ENCODE measurements at regions of chr15 and their contacts with region 1.

Region 1: DNA sequence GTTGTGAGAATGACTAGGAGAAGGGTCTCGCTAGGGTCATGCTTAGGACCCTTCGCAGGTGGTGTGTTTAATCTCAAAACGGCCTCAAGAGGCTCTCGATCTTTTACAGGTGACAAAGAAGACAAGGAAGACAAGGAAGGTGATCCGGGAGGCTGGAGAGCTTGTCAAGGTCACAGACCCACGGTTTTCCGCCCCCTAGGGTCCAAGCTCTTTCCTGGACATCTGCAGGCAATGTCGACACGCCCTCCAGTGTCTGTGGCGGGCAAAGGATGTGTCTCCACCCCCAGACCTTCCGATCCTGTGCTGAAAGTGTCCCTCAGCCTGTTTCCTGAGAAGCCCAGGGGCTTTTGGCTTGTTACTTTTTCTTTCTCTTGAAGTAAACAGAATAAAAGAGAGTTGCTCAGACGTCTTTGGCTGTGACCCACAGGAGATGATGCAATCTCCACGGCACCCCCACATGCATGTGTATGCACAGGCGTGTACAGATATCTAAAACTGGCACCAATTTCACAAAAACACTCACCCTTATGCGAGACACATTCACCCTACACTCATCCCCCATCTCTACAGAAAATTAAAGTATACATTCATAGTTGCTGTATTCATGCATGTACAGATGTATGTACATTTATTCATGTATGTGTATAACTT is 108.8 kb downstream of the KLF13 start:
- DNase-seq: peak in 34 of 35 experiments; percentile 70 to 94 (median 87)
- ATAC-seq: peak; percentile 67 to 80 (median 72)
- H3K4me3 ChIP-seq: peak overlapping the region; percentile 41 to 55
- H3K4me3 Mint-ChIP-seq: peak overlapping the region; percentile 77 to 86 (median 78)
- H3K27ac ChIP-seq: peak overlapping the region; percentile 92
- H3K27ac Mint-ChIP-seq: peak overlapping the region; percentile 98
- H3K4me1 ChIP-seq: peaks cover 32 to 76% of the 10 kb centered on the region in 2 experiments
- H3K4me1 Mint-ChIP-seq: peaks cover 80 to 87% (median 81%) of the 10 kb centered on the region in 3 donors
- H3K27me3 ChIP-seq: no peaks in the 10 kb centered on the region
- H3K27me3 Mint-ChIP-seq: no peaks in the 10 kb centered on the region

Region 2: DNA sequence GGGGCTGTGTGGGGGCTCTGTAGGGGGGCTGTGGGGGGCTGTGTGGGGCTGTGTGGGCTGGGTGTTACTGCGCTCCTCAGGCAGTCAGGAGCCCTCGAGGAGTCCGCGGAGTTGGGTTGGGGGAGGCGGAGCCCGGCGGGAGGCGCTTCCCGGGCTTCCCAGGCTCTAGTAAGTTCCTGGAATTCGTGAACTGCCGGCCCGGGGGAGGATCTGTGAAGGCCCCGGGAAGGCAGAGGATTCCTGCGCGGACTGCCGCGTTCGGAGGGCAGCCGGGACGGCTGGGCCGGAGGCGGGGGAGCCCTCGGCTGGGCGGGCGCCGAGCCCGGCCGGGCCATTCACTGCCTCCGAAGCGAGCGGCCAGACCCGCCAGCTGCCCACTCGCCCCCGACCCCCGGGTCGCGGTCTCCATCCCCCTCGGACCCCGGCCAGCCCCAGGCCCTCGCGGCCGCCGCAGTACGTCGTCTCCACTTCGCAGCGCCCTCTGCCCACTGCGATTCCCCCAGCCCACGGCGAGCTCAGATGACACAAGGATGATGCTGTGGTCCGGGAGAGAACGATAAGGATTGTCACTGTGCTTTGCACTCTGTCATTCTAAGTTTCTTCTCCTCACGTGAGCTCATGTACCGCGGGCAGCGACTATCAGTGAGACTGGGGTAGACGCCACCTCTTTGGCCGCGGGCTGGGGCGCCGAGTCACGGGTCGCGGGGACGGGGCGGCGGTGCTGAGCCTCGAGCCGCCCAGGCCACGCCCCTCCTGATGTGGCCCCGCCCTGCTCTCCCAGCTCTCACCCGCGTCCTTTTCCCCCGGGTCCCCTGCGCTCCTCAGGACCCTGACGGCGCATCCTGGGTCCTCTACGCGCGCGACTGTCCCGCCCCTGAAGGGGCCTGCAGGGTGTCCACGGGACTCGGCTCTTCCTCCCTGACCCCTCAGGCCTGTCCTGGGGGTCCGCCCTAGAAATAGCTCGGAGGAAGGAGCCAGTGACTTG is 43.4 kb before region 1 on chr15:
- CTCF ChIA-PET with region 1: interaction called, 4 to 15 read pairs
- POLR2A ChIA-PET with region 1: interaction called, 4 to 5 read pairs
- DNase-seq: peak; percentile 45 to 89 (median 71)
- ATAC-seq: peak; percentile 82 to 85 (median 84)
- H3K4me3 ChIP-seq: peak overlapping the region; percentile 61 to 83
- H3K4me3 Mint-ChIP-seq: peak overlapping the region; percentile 84 to 93 (median 85)
- H3K27ac ChIP-seq: peak overlapping the region; percentile 72
- H3K27ac Mint-ChIP-seq: peak overlapping the region; percentile 96
- H3K4me1 ChIP-seq: peaks cover 16 to 53% of the 10 kb centered on the region in 2 experiments
- H3K4me1 Mint-ChIP-seq: peaks cover 46 to 54% (median 48%) of the 10 kb centered on the region in 3 donors
- H3K27me3 ChIP-seq: no peaks in the 10 kb centered on the region
- H3K27me3 Mint-ChIP-seq: no peaks in the 10 kb centered on the region

Region 3: GRCh38 chr15:31458591-31459399 is 23.4 kb after region 1 on chr15:
- CTCF ChIA-PET with region 1: interaction called, 3 to 16 read pairs
- POLR2A ChIA-PET with region 1: no interaction called
- DNase-seq: peak in 2 of 35 experiments; percentile 7 to 54
- ATAC-seq: peak in 3 of 4 experiments; percentile 46 to 95 (median 63)
- H3K4me3 ChIP-seq: no peak overlapping the region
- H3K4me3 Mint-ChIP-seq: peak overlapping the region in 1 of 3 donors; percentile 8
- H3K27ac ChIP-seq: no peak overlapping the region
- H3K27ac Mint-ChIP-seq: peak overlapping the region; percentile 35 to 57
- H3K4me1 ChIP-seq: peaks cover 8 to 12% of the 10 kb centered on the region in 2 experiments
- H3K4me1 Mint-ChIP-seq: peaks cover 15 to 32% (median 18%) of the 10 kb centered on the region in 3 donors
- H3K27me3 ChIP-seq: peaks cover 0 to 7% of the 10 kb centered on the region in 2 experiments
- H3K27me3 Mint-ChIP-seq: no peaks in the 10 kb centered on the region

Measured in T-cell (primary cell).